Posterior vena cava (tissue), 2 donors: ENCODE measurements at regions of chr3 and their contacts with region 1.

Region 1: GRCh38 chr3:38095669-38096483 is 41.1 kb downstream of the ACAA1 start:
- DNase-seq: no peak

Region 2: DNA sequence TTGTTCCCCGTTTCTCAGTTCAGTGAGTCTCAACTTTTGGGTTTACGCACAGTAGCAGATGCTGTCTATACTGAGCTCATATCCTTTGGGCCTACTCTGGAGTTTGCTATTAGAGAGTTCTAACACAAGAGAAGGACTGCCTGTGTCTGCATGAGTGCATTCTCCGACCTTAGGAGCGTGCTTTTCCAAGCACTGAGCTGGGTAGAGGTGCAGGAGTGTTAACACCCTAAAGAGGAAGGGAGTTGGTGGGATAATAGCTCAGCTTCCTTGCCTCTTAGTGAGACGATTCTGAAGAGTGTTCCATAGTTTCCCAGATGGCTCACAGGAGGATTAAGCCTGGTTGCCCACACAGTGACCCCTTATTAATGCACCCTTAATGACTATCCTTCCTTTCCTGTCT is 62.6 kb after region 1 on chr3:
- intact Hi-C with region 1: loop called in 1 of 2 experiments (anchors 2 kb)
- DNase-seq: no peak

Region 3: DNA sequence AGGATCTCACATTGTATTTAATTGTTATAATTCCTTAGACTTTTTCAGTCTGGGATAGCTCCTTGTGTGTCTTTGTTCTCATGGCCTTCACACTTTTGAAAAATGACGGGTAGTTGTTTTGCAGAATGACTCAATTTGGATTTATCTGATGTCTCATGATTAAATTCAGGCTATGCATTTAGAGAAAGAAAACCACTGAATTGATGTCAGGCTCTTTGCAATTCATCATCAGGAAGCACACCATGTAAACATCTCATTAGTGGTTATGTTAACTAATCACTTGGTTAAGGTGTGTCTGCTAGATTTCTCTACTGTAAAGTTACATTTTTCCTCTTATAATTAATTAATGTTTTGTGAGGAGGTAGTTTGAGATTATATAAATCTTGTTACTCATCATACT is 161.7 kb after region 1 on chr3:
- intact Hi-C with region 1: no loop called
- DNase-seq: no peak

Region 4: DNA sequence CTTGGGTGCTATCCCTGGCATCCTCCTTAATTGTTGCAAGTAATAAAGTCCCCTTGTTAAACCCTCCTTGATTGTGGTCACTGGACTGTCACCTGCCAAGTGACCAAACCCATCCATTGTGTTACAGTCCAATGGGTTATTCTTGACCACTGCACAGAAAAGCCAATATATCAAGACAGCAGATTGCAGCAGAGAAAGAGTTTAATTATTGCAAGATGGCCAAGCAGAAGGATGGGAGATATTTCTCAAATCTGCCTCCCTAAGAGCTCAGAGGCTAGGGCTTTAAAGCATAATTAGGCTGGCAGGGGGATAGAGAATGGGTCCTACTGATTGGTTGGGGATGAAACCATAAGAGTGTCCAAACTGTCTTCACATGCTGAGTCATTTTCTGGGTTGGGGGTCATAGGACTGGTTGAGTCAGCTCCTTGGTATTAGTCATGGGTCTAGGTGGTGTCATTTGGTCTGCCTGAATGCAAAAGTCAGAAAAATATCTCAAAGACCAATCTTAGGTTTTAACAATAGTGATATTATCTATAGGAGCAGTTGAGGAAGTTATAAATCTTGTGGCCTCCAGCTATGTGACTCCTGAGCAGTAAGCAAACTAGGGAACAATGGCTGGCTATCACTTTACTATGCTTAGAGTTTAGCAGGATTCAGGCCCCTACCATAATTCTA is 231.6 kb after region 1 on chr3:
- intact Hi-C with region 1: no loop called
- DNase-seq: no peak